ENCODE measurements at regions of chr17 and their contacts with region 1.

Region 1: DNA sequence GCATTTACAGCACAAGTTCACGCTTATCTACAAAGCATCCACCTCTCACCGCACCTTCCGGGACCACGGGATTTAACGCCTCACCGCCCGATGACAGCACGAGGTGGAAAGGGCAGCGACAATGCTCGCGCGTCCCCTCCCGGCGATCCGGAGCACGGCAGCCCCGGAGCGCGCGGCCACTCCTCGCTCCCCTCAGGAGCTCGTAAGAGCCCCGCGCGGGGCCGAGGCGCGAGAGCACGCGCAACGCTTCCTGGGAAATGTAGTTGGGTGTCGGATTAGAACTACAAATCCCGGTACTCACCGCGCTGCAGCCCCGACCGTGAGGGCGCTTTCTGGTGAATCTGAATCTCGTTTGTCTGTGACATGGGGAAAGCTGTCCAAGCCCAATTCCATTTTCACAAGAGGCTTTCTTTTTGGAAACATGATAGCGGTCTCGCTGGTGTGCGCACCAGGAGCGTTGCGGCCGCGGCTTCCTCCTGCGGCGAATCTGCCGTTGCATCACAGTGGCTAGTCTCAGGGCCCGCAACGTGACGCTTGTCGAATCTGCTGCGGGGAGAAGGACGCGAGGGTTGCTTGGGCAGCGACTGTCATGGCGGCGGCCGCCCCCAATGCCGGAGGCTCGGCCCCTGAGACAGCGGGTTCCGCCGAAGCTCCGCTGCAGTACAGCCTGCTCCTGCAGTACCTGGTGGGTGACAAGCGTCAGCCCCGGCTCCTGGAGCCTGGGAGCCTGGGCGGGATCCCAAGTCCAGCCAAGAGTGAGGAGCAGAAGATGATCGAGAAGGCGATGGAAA is at the start of gene TIMM22:
- DNase-seq: peak; percentile 85 to 97 (median 93)
- ATAC-seq: peak; percentile 97
- H3K4me3 ChIP-seq: peak within 1 kb of the TSS; percentile 98
- H3K4me3 Mint-ChIP-seq: peak within 1 kb of the TSS; percentile 96 to 100 (median 98)
- H3K27ac ChIP-seq: peak within 1 kb of the TSS; percentile 87
- H3K27ac Mint-ChIP-seq: peak within 1 kb of the TSS; percentile 96 to 99 (median 98)
- H3K4me1 ChIP-seq: peaks cover 14 to 16% of the 10 kb centered on the region in 2 donors
- H3K4me1 Mint-ChIP-seq: peaks cover 13 to 32% (median 24%) of the 10 kb centered on the region in 7 donors
- H3K27me3 ChIP-seq: no peaks in the 10 kb centered on the region
- H3K27me3 Mint-ChIP-seq: peaks cover 0 to 2% (median 0%) of the 10 kb centered on the region in 5 donors
- total RNA-seq, gene TIMM22: 8.3 to 13.5 (median 11.3) TPM

Region 2: GRCh38 chr17:716238-716637 is 280.5 kb before region 1 on chr17:
- CTCF ChIA-PET with region 1: interaction called, 3 read pairs
- POLR2A ChIA-PET with region 1: no interaction called
- intact Hi-C with region 1: loop called in 1 of 2 experiments (anchors 1 kb)
- DNase-seq: no peak
- ATAC-seq: no peak
- H3K4me3 ChIP-seq: no peak overlapping the region
- H3K4me3 Mint-ChIP-seq: peak overlapping the region in 4 of 10 donors; percentile 35 to 80 (median 60)
- H3K27ac ChIP-seq: no peak overlapping the region
- H3K27ac Mint-ChIP-seq: no peak overlapping the region
- H3K4me1 ChIP-seq: peaks cover 10 to 12% of the 10 kb centered on the region in 2 donors
- H3K4me1 Mint-ChIP-seq: peaks cover 21 to 35% (median 28%) of the 10 kb centered on the region in 7 donors
- H3K27me3 ChIP-seq: no peaks in the 10 kb centered on the region
- H3K27me3 Mint-ChIP-seq: peaks cover 0 to 2% (median 0%) of the 10 kb centered on the region in 5 donors

Region 3: DNA sequence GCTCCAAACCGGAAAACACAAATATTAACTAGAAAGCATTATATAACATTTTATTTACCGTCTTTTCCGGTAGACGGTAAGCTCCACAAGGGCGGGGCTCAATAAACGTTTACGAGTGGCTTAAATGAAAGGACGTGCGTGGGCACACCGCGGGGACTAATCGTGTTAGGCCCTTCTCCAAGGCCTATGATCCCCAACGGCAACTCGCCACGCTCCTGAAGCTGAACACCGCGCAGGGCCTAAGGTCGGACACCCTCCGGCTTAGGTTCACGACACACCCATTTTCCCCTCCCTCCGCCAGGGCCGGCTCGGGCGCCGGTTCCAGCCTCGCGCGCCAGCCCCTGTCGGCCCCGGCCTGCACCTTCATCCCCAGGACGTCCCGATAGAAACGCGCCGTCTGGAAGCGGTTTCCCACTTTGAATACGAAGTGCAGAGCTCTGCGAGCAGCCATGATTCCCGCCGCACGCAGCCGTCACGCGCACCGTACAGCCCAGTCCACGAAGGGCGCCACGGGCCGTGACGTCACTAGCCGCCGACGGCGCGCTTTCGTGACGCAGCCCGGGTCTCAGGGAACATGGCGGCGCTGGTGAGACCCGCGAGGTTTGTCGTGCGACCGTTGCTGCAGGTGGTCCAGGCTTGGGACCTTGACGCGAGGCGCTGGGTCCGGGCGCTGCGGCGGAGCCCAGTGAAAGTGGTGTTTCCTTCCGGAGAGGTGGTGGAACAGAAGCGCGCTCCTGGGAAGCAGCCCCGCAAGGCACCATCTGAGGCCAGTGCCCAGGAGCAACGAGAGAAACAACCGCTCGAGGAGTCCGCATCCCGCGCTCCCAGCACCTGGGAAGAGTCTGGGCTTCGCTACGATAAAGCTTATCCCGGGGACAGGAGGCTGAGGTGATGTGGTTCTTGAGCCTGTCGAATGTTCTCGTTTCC is 214.7 kb before region 1 on chr17 and contains the starts of genes GLOD4 and MRM3:
- CTCF ChIA-PET with region 1: interaction called, 5 read pairs
- POLR2A ChIA-PET with region 1: interaction called, 12 read pairs
- intact Hi-C with region 1: loop called (anchors 1 kb)
- DNase-seq: peak; percentile 92 to 100 (median 96)
- ATAC-seq: peak; percentile 98
- H3K4me3 ChIP-seq: peak within 1 kb of the TSS; percentile 88
- H3K4me3 Mint-ChIP-seq: peak within 1 kb of the TSS; percentile 95 to 98 (median 97)
- H3K27ac ChIP-seq: peak within 1 kb of the TSS; percentile 84
- H3K27ac Mint-ChIP-seq: peak within 1 kb of the TSS; percentile 95 to 98 (median 97)
- H3K4me1 ChIP-seq: peaks cover 16 to 24% of the 10 kb centered on the region in 2 donors
- H3K4me1 Mint-ChIP-seq: peaks cover 13 to 54% (median 38%) of the 10 kb centered on the region in 7 donors
- H3K27me3 ChIP-seq: no peaks in the 10 kb centered on the region
- H3K27me3 Mint-ChIP-seq: no peaks in the 10 kb centered on the region
- total RNA-seq, gene GLOD4: 60.1 to 79.0 (median 77.6) TPM
- total RNA-seq, gene MRM3: 19.3 to 47.1 (median 25.9) TPM

Region 4: GRCh38 chr17:879549-880442 is 117.0 kb before region 1 on chr17:
- CTCF ChIA-PET with region 1: interaction called, 10 read pairs
- POLR2A ChIA-PET with region 1: no interaction called
- intact Hi-C with region 1: loop called (anchors 1 to 2 kb)
- DNase-seq: peak; percentile 37 to 71 (median 64)
- ATAC-seq: peak; percentile 77
- H3K4me3 ChIP-seq: no peak overlapping the region
- H3K4me3 Mint-ChIP-seq: peak overlapping the region in 1 of 10 donors; percentile 39
- H3K27ac ChIP-seq: no peak overlapping the region
- H3K27ac Mint-ChIP-seq: no peak overlapping the region
- H3K4me1 ChIP-seq: peaks cover 0 to 3% of the 10 kb centered on the region in 2 donors
- H3K4me1 Mint-ChIP-seq: peaks cover 2 to 12% (median 11%) of the 10 kb centered on the region in 7 donors
- H3K27me3 ChIP-seq: no peaks in the 10 kb centered on the region
- H3K27me3 Mint-ChIP-seq: peaks cover 5 to 32% (median 22%) of the 10 kb centered on the region in 5 donors

Measured in naive thymus-derived CD4-positive, alpha-beta T cell (primary cell).